IMR-90 (cell line): ENCODE measurements at regions of chr15 and their contacts with region 1.

Region 1: GRCh38 chr15:38894243-38894948 is 329.8 kb upstream of the RASGRP1 start:
- DNase-seq: peak; percentile 96
- ATAC-seq: peak; percentile 71
- H3K4me3 ChIP-seq: no peak overlapping the region
- H3K27ac ChIP-seq: peak overlapping the region; percentile 100; the same call in 1 of the 2 replicates
- H3K4me1 ChIP-seq: peaks cover 21% of the 10 kb centered on the region
- H3K27me3 ChIP-seq: no peaks in the 10 kb centered on the region
- CTCF ChIP-seq: no peak
- POLR2A ChIP-seq: no peak
- RAD21 ChIP-seq: no peak

Region 2: DNA sequence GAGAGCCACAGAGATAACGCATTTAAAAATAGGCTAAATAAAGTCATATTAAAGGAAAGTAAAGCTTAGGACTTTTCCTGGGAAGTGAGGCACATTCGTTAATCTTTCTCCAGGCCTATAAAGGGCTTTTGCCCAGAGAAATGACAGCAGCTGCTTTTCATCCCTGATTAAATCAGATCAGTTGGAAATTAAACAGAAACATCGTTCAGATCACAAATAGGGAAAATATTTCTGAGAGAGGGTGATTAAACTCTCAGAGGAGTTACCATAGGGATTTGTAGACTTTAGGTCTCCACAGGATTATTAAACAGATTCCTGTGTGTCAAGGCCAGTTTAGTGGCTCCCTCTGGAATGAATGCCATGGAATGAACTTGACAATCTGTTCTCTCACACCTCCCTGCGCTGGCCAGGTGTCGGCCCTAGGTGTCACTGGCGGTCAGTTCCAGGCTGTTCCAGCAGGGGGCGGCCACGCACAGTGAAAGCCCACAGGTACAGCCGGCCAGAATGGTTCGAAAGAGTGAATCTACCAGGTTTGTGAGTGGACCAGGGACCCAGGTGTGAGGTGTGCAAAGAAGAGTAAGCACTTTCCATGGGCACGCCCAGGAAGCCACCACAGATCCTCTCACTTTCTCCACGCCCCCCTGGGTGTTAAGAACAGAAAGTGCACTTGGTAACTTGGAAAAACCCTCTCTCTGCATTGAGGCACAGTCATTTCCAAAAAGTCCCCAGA is 76.8 kb before region 1 on chr15:
- CTCF ChIA-PET with region 1: interaction called, 4 read pairs
- POLR2A ChIA-PET with region 1: no interaction called
- dilution Hi-C with region 1: no loop called
- in situ Hi-C with region 1: no loop called
- intact Hi-C with region 1: loop called (anchors 2 kb)
- DNase-seq: peak; percentile 48
- ATAC-seq: peak; percentile 97
- H3K4me3 ChIP-seq: no peak overlapping the region
- H3K27ac ChIP-seq: peak overlapping the region; percentile 26
- H3K4me1 ChIP-seq: peaks cover 8% of the 10 kb centered on the region
- H3K27me3 ChIP-seq: no peaks in the 10 kb centered on the region
- CTCF ChIP-seq: peak; percentile 98
- POLR2A ChIP-seq: no peak
- RAD21 ChIP-seq: peak; percentile 95

Region 3: DNA sequence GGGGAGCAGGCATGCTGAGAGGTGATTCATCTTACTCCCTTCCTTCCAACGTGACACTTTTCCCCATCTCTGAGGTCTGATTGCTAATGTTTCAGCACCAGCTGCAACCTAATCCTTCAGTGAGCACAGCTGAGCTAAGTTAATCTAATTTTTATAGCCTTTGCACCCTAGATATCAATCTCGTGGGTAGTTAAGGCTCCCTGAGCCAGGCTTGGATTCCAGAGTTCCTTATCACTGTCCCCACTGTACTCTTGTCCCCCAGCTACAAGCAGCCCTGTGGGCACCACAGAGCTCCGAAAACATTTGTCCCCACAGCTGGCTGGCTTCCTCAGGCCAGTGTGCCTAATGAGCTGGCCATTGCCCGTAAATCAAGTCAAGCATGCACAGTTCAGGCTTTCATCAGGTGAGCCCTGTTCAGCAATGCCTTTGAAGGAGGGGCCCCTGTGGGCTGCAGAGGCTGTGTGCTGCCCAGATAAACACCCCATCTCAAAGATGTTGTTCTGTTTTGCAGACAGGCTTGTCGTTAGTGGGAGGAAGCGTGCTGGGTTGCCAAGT is 47.1 kb after region 1 on chr15:
- CTCF ChIA-PET with region 1: no interaction called
- POLR2A ChIA-PET with region 1: no interaction called
- dilution Hi-C with region 1: no loop called
- in situ Hi-C with region 1: no loop called
- intact Hi-C with region 1: loop called (anchors 2 kb)
- DNase-seq: peak; percentile 46
- ATAC-seq: peak; percentile 57
- H3K4me3 ChIP-seq: no peak overlapping the region
- H3K27ac ChIP-seq: no peak overlapping the region
- H3K4me1 ChIP-seq: peaks cover 6% of the 10 kb centered on the region
- H3K27me3 ChIP-seq: no peaks in the 10 kb centered on the region
- CTCF ChIP-seq: no peak
- POLR2A ChIP-seq: no peak
- RAD21 ChIP-seq: no peak

Region 4: GRCh38 chr15:39125904-39126303 is 231.5 kb after region 1 on chr15:
- CTCF ChIA-PET with region 1: no interaction called
- POLR2A ChIA-PET with region 1: no interaction called
- dilution Hi-C with region 1: no loop called
- in situ Hi-C with region 1: no loop called
- intact Hi-C with region 1: loop called (anchors 5 kb)
- DNase-seq: peak; percentile 68
- ATAC-seq: no peak
- H3K4me3 ChIP-seq: no peak overlapping the region
- H3K27ac ChIP-seq: peak overlapping the region; percentile 39; the same call in 1 of the 2 replicates
- H3K4me1 ChIP-seq: peaks cover 37% of the 10 kb centered on the region
- H3K27me3 ChIP-seq: no peaks in the 10 kb centered on the region
- CTCF ChIP-seq: peak; percentile 64
- POLR2A ChIP-seq: no peak
- RAD21 ChIP-seq: peak; percentile 62

Region 5: GRCh38 chr15:39301589-39301999 is 407.2 kb after region 1 on chr15:
- CTCF ChIA-PET with region 1: no interaction called
- POLR2A ChIA-PET with region 1: interaction called, 3 read pairs
- dilution Hi-C with region 1: no loop called
- in situ Hi-C with region 1: no loop called
- intact Hi-C with region 1: loop called (anchors 10 kb)
- DNase-seq: peak; percentile 77
- ATAC-seq: peak; percentile 7; the same call in 1 of the 2 replicates
- H3K4me3 ChIP-seq: no peak overlapping the region
- H3K27ac ChIP-seq: peak overlapping the region; percentile 96
- H3K4me1 ChIP-seq: peaks cover 24% of the 10 kb centered on the region
- H3K27me3 ChIP-seq: no peaks in the 10 kb centered on the region
- CTCF ChIP-seq: no peak
- POLR2A ChIP-seq: no peak
- RAD21 ChIP-seq: no peak